ENCODE measurements at regions of chr5 and their contacts with region 1.

Region 1: DNA sequence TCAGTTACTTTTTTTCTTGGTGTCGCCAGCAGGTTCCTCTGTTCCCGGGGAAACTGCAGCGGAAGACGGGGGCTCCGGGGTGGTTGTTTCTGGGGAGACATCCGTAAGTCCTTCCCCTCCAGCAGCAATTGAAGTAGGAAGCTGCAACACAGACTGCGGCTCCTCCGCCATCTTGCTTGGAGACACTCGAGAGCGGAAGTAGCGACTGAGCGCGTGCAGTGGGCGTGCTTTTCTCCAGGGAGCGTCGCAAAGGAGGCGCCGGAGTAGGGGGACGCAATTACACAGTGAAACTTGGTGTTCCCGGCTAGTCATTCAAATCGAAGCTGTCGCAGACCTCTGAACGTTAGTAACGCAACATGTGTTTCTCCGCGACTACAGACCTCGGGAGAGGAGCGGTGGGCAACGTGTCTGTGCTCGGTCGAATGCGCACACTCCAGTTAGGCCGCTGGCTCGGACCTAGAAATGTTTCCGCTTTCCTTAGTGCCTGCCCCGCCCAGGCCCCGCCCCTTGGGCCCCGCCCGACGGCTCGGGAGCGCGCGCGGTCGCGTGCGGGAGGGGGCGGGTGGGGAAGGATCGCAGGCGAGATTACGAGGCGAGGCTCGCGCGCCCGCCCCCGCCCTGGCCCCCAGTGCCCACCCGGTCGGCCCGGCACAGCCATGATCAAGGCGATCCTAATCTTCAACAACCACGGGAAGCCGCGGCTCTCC is at the starts of genes AP3S1 and ATG12:
- DNase-seq: peak; percentile 98
- ATAC-seq: peak; percentile 81
- H3K4me3 ChIP-seq: peak within 1 kb of the TSS; percentile 81 to 96 (median 93)
- H3K4me3 Mint-ChIP-seq: peak within 1 kb of the TSS; percentile 100
- H3K27ac ChIP-seq: peak within 1 kb of the TSS; percentile 89 to 94
- H3K27ac Mint-ChIP-seq: peak within 1 kb of the TSS; percentile 100
- H3K4me1 ChIP-seq: peaks cover 41 to 45% of the 10 kb centered on the region in 2 donors
- H3K4me1 Mint-ChIP-seq: peaks cover 72% of the 10 kb centered on the region
- H3K27me3 ChIP-seq: no peaks in the 10 kb centered on the region
- H3K27me3 Mint-ChIP-seq: no peaks in the 10 kb centered on the region
- CTCF ChIP-seq: no peak
- total RNA-seq, gene AP3S1: 37.1 and 47.6 TPM in 2 replicates
- total RNA-seq, gene ATG12: 97.5 and 101 TPM in 2 replicates

Region 2: DNA sequence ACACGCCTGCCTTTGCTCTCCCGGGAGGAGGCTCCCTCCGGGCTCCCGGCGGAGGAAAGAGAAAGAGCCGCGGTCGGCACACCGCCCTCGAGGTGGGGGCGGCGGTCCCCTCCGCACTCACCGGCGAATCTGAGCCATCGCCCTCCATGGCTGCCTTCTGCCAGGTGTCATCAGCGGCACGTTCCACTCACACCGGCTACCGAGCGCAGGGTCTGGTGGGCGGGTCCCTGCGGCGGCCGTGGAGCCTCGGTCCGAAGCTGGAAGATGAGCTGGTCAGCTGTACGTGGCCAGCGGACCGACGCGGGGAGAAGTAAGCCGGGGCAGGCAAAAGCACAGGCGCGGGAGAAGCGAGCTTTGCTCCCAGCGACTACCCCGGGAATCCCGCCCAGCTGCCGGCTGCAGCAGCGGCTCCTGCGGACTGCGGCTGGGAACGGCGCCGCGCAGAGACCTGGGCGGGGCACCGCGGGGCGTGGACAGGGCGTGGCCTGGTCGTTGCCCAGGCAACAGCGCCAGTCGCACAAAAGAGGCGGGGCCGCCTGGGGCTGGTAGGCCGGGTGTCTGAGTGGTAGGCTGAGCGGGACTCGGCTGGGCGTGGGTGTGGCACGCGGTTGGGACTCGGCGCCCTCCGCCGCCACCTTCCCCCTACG is 671.9 kb before region 1 on chr5 and contains the start of gene TRIM36:
- CTCF ChIA-PET with region 1: no interaction called
- POLR2A ChIA-PET with region 1: interaction called, 3 read pairs
- intact Hi-C with region 1: loop called (anchors 1 kb)
- DNase-seq: peak; percentile 94
- ATAC-seq: peak; percentile 92
- H3K4me3 ChIP-seq: peak within 1 kb of the TSS; percentile 53 to 89 (median 75)
- H3K4me3 Mint-ChIP-seq: peak within 1 kb of the TSS; percentile 92
- H3K27ac ChIP-seq: no peak within 1 kb of the TSS
- H3K27ac Mint-ChIP-seq: peak within 1 kb of the TSS; percentile 80
- H3K4me1 ChIP-seq: peaks cover 20 to 21% of the 10 kb centered on the region in 2 donors
- H3K4me1 Mint-ChIP-seq: peaks cover 14% of the 10 kb centered on the region
- H3K27me3 ChIP-seq: peaks cover 0 to 62% (median 32%) of the 10 kb centered on the region in 4 experiments
- H3K27me3 Mint-ChIP-seq: peaks cover 59% of the 10 kb centered on the region
- CTCF ChIP-seq: no peak
- total RNA-seq, gene TRIM36: 0.39 and 1.6 TPM in 2 replicates

Region 3: GRCh38 chr5:115296124-115297022 is 545.2 kb before region 1 on chr5 and contains the start of gene CCDC112:
- CTCF ChIA-PET with region 1: interaction called, 3 read pairs
- POLR2A ChIA-PET with region 1: no interaction called
- intact Hi-C with region 1: loop called (anchors 5 kb)
- DNase-seq: peak; percentile 82
- ATAC-seq: peak; percentile 86
- H3K4me3 ChIP-seq: peak within 1 kb of the TSS; percentile 53 to 78 (median 70)
- H3K4me3 Mint-ChIP-seq: peak within 1 kb of the TSS; percentile 86
- H3K27ac ChIP-seq: peak within 1 kb of the TSS in 1 of 2 donors; percentile 39
- H3K27ac Mint-ChIP-seq: peak within 1 kb of the TSS; percentile 16
- H3K4me1 ChIP-seq: peaks cover 7 to 13% of the 10 kb centered on the region in 2 donors
- H3K4me1 Mint-ChIP-seq: peaks cover 16% of the 10 kb centered on the region
- H3K27me3 ChIP-seq: no peaks in the 10 kb centered on the region
- H3K27me3 Mint-ChIP-seq: no peaks in the 10 kb centered on the region
- CTCF ChIP-seq: no peak
- total RNA-seq, gene CCDC112: 9.6 and 11.1 TPM in 2 replicates

Region 4: GRCh38 chr5:115544436-115545350 is 296.8 kb before region 1 on chr5 and contains the start of gene FEM1C:
- CTCF ChIA-PET with region 1: interaction called, 3 read pairs
- POLR2A ChIA-PET with region 1: interaction called, 3 read pairs
- intact Hi-C with region 1: loop called (anchors 1 kb)
- DNase-seq: peak; percentile 95
- ATAC-seq: peak; percentile 93
- H3K4me3 ChIP-seq: peak within 1 kb of the TSS; percentile 83 to 95 (median 86)
- H3K4me3 Mint-ChIP-seq: peak within 1 kb of the TSS; percentile 94
- H3K27ac ChIP-seq: peak within 1 kb of the TSS; percentile 91 to 98
- H3K27ac Mint-ChIP-seq: peak within 1 kb of the TSS; percentile 98
- H3K4me1 ChIP-seq: peaks cover 30 to 38% of the 10 kb centered on the region in 2 donors
- H3K4me1 Mint-ChIP-seq: peaks cover 42% of the 10 kb centered on the region
- H3K27me3 ChIP-seq: no peaks in the 10 kb centered on the region
- H3K27me3 Mint-ChIP-seq: no peaks in the 10 kb centered on the region
- CTCF ChIP-seq: no peak
- total RNA-seq, gene FEM1C: 18.2 and 18.7 TPM in 2 replicates

Region 5: GRCh38 chr5:115625579-115626444 is 215.7 kb before region 1 on chr5 and contains the start of gene TMED7:
- CTCF ChIA-PET with region 1: interaction called, 6 read pairs
- POLR2A ChIA-PET with region 1: no interaction called
- intact Hi-C with region 1: loop called (anchors 1 kb)
- DNase-seq: peak; percentile 99
- ATAC-seq: peak; percentile 92
- H3K4me3 ChIP-seq: peak within 1 kb of the TSS; percentile 67 to 92 (median 87)
- H3K4me3 Mint-ChIP-seq: no peak within 1 kb of the TSS
- H3K27ac ChIP-seq: peak within 1 kb of the TSS; percentile 88 to 96
- H3K27ac Mint-ChIP-seq: no peak within 1 kb of the TSS
- H3K4me1 ChIP-seq: peaks cover 32 to 35% of the 10 kb centered on the region in 2 donors
- H3K4me1 Mint-ChIP-seq: peaks cover 27% of the 10 kb centered on the region
- H3K27me3 ChIP-seq: peaks cover 0 to 5% (median 0%) of the 10 kb centered on the region in 4 experiments
- H3K27me3 Mint-ChIP-seq: no peaks in the 10 kb centered on the region
- CTCF ChIP-seq: no peak
- total RNA-seq, gene TMED7: 40.3 and 40.4 TPM in 2 replicates

Region 6: GRCh38 chr5:115831163-115831768 is 10.3 kb before region 1 on chr5:
- CTCF ChIA-PET with region 1: interaction called, 15 read pairs
- POLR2A ChIA-PET with region 1: no interaction called
- intact Hi-C with region 1: loop called (anchors 1 kb)
- DNase-seq: peak; percentile 68
- ATAC-seq: peak; percentile 65
- H3K4me3 ChIP-seq: no peak overlapping the region
- H3K4me3 Mint-ChIP-seq: no peak overlapping the region
- H3K27ac ChIP-seq: no peak overlapping the region
- H3K27ac Mint-ChIP-seq: no peak overlapping the region
- H3K4me1 ChIP-seq: no peaks in the 10 kb centered on the region
- H3K4me1 Mint-ChIP-seq: peaks cover 5% of the 10 kb centered on the region
- H3K27me3 ChIP-seq: no peaks in the 10 kb centered on the region
- H3K27me3 Mint-ChIP-seq: no peaks in the 10 kb centered on the region
- CTCF ChIP-seq: peak; percentile 89

Region 7: DNA sequence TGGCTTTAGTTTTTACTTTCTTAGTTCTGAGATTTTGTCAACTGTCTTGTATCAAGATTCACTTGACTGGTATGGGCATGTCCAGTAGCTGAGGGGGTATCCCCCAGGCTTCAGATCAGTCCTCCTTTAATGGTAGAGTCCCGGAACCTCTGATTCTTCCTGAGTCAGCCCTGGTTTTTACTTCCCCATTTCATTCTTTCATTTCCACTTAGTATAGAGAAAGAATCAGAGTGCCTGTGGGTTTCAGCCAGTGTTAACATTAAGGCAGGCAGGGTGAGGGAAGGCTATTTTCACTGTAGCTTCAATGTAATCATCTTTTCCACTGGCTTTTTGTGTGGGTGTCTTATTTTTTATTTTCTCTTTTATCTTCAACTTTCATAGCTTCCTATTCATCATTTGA is 235.0 kb after region 1 on chr5:
- CTCF ChIA-PET with region 1: no interaction called
- POLR2A ChIA-PET with region 1: no interaction called
- intact Hi-C with region 1: loop called (anchors 2 kb)
- DNase-seq: peak; percentile 82
- ATAC-seq: peak; percentile 96
- H3K4me3 ChIP-seq: no peak overlapping the region
- H3K4me3 Mint-ChIP-seq: peak overlapping the region; percentile 44
- H3K27ac ChIP-seq: peak overlapping the region in 1 of 2 donors; percentile 43
- H3K27ac Mint-ChIP-seq: peak overlapping the region; percentile 12
- H3K4me1 ChIP-seq: peaks cover 24% of the 10 kb centered on the region in 2 donors
- H3K4me1 Mint-ChIP-seq: peaks cover 30% of the 10 kb centered on the region
- H3K27me3 ChIP-seq: no peaks in the 10 kb centered on the region
- H3K27me3 Mint-ChIP-seq: no peaks in the 10 kb centered on the region
- CTCF ChIP-seq: no peak

Measured in B cell (primary cell).